HAP-1 (cell line): ENCODE measurements at regions of chr20 and their contacts with region 1.

Region 1: GRCh38 chr20:10357974-10358373 is 76.0 kb downstream of the MKKS start:
- DNase-seq: peak in 1 of 2 experiments; percentile 30
- H3K4me3 ChIP-seq: no peak overlapping the region
- H3K4me1 ChIP-seq: no peaks in the 10 kb centered on the region
- H3K27me3 ChIP-seq: no peaks in the 10 kb centered on the region

Region 2: DNA sequence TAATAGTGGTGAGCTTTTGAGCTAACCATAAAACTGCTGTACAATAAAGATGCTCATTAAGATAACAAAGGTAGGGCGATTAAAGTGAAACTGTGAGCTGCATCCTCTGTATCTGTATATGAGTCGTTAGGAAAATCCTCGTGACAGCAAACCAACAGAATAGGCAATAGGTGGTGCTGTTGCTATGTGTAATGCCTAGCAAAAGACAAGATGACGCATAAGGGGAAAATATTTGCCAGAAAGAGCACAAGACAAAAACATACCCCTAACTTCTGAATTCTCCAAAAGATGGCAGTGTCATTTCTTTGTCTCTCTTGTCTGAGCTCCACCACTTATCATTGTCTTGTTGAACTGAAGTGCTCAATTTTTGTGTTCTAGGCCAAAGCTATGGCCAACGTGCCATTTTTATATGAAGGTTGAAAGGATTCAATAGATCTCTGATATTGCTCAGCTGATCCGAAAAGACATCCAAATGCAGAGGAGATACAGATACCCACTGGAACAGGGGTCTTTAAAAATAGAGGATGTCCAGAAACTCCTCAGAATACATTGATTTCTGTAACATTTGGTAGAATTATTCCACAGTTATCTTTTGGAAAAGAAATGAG is 379.5 kb before region 1 on chr20:
- in situ Hi-C with region 1: loop called (anchors 25 kb)
- DNase-seq: peak; percentile 43 to 72
- H3K4me3 ChIP-seq: no peak overlapping the region
- H3K4me1 ChIP-seq: no peaks in the 10 kb centered on the region
- H3K27me3 ChIP-seq: no peaks in the 10 kb centered on the region

Region 3: DNA sequence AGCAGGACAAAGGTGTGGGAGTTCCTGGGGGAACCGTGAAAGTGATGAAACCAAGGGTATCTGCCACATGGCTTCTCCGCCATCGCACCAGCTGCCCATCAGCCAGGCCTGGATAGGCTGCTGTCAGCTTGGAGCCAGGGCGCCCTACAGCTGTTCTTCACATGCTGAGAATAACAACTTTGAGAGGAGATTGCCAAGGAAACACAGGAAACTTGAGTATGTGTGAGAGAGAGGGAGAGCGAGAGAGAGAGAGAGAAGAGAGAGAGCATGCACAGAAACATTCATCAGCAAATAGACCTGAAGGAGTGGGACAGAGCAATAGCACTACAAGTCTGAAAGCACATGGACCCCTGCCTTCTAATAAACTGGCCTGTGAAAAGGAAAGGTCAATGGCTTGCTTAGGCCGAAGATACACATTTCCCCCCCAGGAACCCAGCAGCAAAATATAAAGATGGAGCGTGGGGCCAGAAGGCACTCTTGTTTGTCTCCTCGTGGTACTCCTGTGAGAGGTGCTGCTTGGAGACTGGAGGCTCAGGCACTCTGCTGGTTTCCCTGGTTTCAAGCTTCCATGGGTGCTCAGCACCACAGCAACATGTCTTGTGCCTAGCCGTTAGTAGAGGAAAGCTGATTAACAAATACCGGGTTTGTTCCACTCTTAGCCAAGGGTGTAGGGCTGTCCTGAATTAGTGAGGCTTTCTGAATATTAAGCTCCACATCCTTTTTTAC is 86.3 kb before region 1 on chr20:
- in situ Hi-C with region 1: no loop called
- DNase-seq: no peak
- H3K4me3 ChIP-seq: no peak overlapping the region
- H3K4me1 ChIP-seq: no peaks in the 10 kb centered on the region
- H3K27me3 ChIP-seq: no peaks in the 10 kb centered on the region